Endothelial cell of umbilical vein (primary cell): ENCODE measurements at regions of chr4 and their contacts with region 1.

Region 1: GRCh38 chr4:86908251-86908657 is 16.0 kb upstream of the C4orf36 start:
- DNase-seq: peak; percentile 33
- H3K4me3 ChIP-seq: no peak overlapping the region
- H3K27ac ChIP-seq: no peak overlapping the region
- H3K4me1 ChIP-seq: no peaks in the 10 kb centered on the region
- H3K27me3 ChIP-seq: no peaks in the 10 kb centered on the region
- CTCF ChIP-seq: no peak
- POLR2A ChIP-seq: no peak

Region 2: GRCh38 chr4:87108142-87108546 is 199.9 kb after region 1 on chr4:
- CTCF ChIA-PET with region 1: no interaction called
- POLR2A ChIA-PET with region 1: no interaction called
- dilution Hi-C with region 1: loop called (anchors 25 kb)
- intact Hi-C with region 1: no loop called
- DNase-seq: peak; percentile 58
- H3K4me3 ChIP-seq: no peak overlapping the region
- H3K27ac ChIP-seq: peak overlapping the region; percentile 60
- H3K4me1 ChIP-seq: peaks cover 40% of the 10 kb centered on the region
- H3K27me3 ChIP-seq: no peaks in the 10 kb centered on the region
- CTCF ChIP-seq: no peak
- POLR2A ChIP-seq: no peak